Gastrocnemius medialis (tissue), 4 donors: ENCODE measurements at regions of chr17 and their contacts with region 1.

Region 1: DNA sequence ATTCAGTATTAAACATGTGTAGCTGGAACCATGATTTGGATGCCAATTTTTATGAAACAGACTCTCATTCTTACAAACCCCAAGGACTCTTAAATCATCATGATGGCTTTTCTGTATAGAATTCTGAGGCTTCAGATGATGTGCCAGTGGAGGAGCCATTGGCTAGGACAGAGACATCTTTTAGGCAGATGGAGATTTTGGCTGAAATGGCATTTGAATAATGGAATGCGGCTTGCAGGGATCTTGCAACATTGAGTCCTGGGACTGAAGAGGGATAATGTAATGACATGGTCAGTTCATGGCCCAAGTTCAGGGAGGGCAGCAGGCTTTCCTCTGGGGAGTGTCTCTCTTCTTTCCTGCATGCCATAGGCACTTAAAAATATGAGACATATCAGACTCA is 172.4 kb downstream of the ABCA8 start:
- DNase-seq: peak; percentile 18 to 61
- ATAC-seq: peak; percentile 73 to 83
- H3K4me3 ChIP-seq: no peak overlapping the region
- H3K27ac ChIP-seq: peak overlapping the region in 2 of 4 donors; percentile 2 to 46
- H3K4me1 ChIP-seq: peaks cover 14 to 18% of the 10 kb centered on the region in 2 donors
- H3K27me3 ChIP-seq: no peaks in the 10 kb centered on the region
- CTCF ChIP-seq: no peak
- POLR2A ChIP-seq: no peak

Region 2: GRCh38 chr17:68909066-68909465 is 126.3 kb after region 1 on chr17:
- in situ Hi-C with region 1: loop called in 1 of 4 experiments (anchors 10 kb)
- intact Hi-C with region 1: loop called (anchors 5 kb)
- DNase-seq: peak in 1 of 2 donors; percentile 31
- ATAC-seq: peak; percentile 23 to 65
- H3K4me3 ChIP-seq: no peak overlapping the region
- H3K27ac ChIP-seq: peak overlapping the region in 2 of 4 donors; percentile 22 to 31
- H3K4me1 ChIP-seq: peaks cover 5 to 10% of the 10 kb centered on the region in 2 donors
- H3K27me3 ChIP-seq: no peaks in the 10 kb centered on the region
- CTCF ChIP-seq: no peak
- POLR2A ChIP-seq: no peak